ENCODE measurements at regions of chr2 and their contacts with region 1.

Region 1: GRCh38 chr2:110677530-110678456 is at the start of gene BUB1:
- DNase-seq: peak; percentile 83
- ATAC-seq: peak; percentile 88
- H3K4me3 ChIP-seq: peak within 1 kb of the TSS; percentile 87
- H3K27ac ChIP-seq: peak within 1 kb of the TSS; percentile 98
- H3K4me1 ChIP-seq: peaks cover 9% of the 10 kb centered on the region
- H3K27me3 ChIP-seq: no peaks in the 10 kb centered on the region
- CTCF ChIP-seq: no peak
- EP300 ChIP-seq: peak in 1 of 2 experiments; percentile 52; a peak in 2 of 4 replicates
- POLR2A ChIP-seq: peak; percentile 87
- RAD21 ChIP-seq: no peak
- polyA plus RNA-seq, gene BUB1: 52.4 to 57.0 TPM

Region 2: DNA sequence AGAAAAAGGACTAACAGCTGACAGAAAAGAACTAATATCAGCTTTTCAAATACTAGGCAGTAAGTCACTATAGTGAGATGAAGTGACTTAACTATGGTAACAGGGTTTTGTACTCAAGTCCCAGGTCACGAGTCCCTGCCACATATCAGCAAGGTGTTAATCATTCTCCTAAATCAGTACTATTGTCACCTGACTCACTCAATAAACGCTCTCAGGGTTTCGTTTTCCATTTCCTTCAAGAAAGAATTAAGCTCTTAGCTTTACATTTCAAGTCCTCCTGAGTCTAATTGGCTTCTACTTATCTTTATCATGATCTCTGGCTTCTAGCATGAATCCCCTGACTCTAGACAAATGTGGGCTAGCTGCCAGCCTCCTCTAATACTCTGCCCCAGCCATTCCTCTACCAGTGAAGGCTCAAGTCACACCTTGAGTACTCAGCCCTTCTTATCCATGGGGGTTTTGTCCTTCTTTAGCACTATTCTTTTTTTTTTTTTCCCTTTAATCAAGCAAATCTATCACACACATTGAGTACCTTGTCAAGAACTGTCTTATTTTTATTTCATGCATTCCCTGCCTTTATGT is 20.0 kb before region 1 on chr2:
- CTCF ChIA-PET with region 1: interaction called, 5 read pairs
- POLR2A ChIA-PET with region 1: interaction called, 15 read pairs
- RAD21 ChIA-PET with region 1: interaction called, 23 read pairs
- SMC1A ChIA-PET with region 1: interaction called, 26 read pairs
- in situ Hi-C with region 1: no loop called
- intact Hi-C with region 1: no loop called
- DNase-seq: no peak
- ATAC-seq: peak; percentile 71
- H3K4me3 ChIP-seq: no peak overlapping the region
- H3K27ac ChIP-seq: no peak overlapping the region
- H3K4me1 ChIP-seq: no peaks in the 10 kb centered on the region
- H3K27me3 ChIP-seq: no peaks in the 10 kb centered on the region
- CTCF ChIP-seq: no peak
- EP300 ChIP-seq: no peak
- POLR2A ChIP-seq: no peak
- RAD21 ChIP-seq: no peak

Region 3: GRCh38 chr2:110688594-110689091 is 10.8 kb after region 1 on chr2:
- CTCF ChIA-PET with region 1: interaction called, 8 read pairs
- POLR2A ChIA-PET with region 1: interaction called, 13 read pairs
- RAD21 ChIA-PET with region 1: interaction called, 3 read pairs
- SMC1A ChIA-PET with region 1: interaction called, 4 read pairs
- in situ Hi-C with region 1: no loop called
- intact Hi-C with region 1: no loop called
- DNase-seq: no peak
- ATAC-seq: no peak
- H3K4me3 ChIP-seq: no peak overlapping the region
- H3K27ac ChIP-seq: no peak overlapping the region
- H3K4me1 ChIP-seq: no peaks in the 10 kb centered on the region
- H3K27me3 ChIP-seq: no peaks in the 10 kb centered on the region
- CTCF ChIP-seq: no peak
- EP300 ChIP-seq: no peak
- POLR2A ChIP-seq: no peak
- RAD21 ChIP-seq: no peak

Region 4: DNA sequence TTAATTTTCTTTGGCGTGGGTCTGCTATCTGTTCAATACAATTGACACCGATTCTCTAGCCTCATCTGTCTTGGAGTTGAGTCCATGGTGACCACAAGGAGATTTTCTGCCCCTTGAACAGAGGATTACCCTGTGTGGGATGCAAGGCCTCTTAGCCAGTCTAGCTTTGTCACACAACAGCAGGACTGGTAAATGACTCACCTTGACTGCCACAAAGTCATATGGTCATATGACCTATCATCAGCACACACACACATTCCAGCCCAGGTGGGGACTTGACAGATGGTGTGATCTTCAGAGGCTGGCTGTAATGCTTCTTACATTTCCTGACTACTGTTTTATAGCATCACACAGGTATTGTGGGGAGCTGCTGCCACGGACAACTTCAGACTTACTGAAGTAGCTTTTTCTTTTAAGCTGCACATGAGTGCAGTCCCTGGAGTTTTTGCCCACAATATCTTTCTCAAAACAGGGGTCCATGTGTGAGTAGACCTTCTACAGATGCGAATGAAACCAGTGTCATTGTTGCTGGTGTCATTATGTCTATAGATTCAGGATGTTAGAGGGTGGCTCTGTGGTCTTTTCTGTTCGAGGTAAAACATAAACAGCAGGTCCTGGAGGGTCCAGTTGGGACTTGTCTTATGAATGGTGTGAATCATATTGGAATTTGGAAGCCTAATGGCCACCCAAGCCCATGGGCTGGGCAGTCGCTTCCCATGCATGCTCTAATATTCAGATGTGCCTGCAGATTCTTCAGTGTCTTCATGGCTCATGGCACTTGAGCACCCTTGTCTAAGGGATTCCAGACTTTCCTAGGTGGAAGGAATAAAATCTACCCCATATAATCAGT is 35.9 kb after region 1 on chr2:
- CTCF ChIA-PET with region 1: interaction called, 3 read pairs
- POLR2A ChIA-PET with region 1: interaction called, 3 read pairs
- RAD21 ChIA-PET with region 1: interaction called, 8 read pairs
- SMC1A ChIA-PET with region 1: interaction called, 43 read pairs
- in situ Hi-C with region 1: no loop called
- intact Hi-C with region 1: no loop called
- DNase-seq: no peak
- ATAC-seq: peak; percentile 55
- H3K4me3 ChIP-seq: no peak overlapping the region
- H3K27ac ChIP-seq: no peak overlapping the region
- H3K4me1 ChIP-seq: no peaks in the 10 kb centered on the region
- H3K27me3 ChIP-seq: peaks cover 0 to 3% of the 10 kb centered on the region in 2 experiments; a peak in 1 of 4 replicates
- CTCF ChIP-seq: no peak
- EP300 ChIP-seq: no peak
- POLR2A ChIP-seq: no peak
- RAD21 ChIP-seq: no peak

Region 5: DNA sequence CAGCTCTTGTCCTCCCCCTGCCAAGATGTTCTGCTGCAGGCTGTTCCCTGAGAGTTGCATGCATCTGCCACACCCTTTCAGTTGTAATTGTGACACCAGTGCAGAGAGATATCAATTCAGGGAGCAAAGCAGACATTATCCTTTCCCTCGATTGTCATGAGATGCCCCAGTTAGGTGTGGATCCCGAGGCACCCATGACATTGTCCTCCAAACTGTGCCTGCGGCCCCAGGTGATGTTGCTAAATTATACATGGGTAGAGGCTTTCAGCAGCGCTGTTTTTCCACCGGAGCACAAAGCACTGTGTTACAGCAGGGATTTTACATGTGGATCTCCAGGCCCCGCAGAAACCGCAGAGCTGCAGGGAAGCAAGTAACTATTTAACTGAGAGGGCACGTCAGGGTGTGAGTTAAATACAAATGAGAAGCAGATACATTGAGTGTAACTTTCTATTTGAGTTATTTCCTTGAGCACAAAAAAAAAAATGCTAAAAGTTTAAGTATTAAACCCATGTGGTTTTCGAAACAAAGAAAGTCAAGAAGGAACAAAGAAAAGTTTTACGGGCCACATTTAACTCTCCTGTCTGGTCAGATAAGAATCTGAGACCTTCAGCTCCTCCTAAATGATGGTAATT is 352.6 kb after region 1 on chr2:
- CTCF ChIA-PET with region 1: no interaction called
- POLR2A ChIA-PET with region 1: no interaction called
- RAD21 ChIA-PET with region 1: no interaction called
- SMC1A ChIA-PET with region 1: no interaction called
- in situ Hi-C with region 1: no loop called
- intact Hi-C with region 1: no loop called
- DNase-seq: no peak
- ATAC-seq: peak; percentile 81
- H3K4me3 ChIP-seq: no peak overlapping the region
- H3K27ac ChIP-seq: no peak overlapping the region
- H3K4me1 ChIP-seq: peaks cover 11% of the 10 kb centered on the region
- H3K27me3 ChIP-seq: peaks cover 0 to 11% of the 10 kb centered on the region in 2 experiments; a peak in 3 of 4 replicates
- CTCF ChIP-seq: no peak
- EP300 ChIP-seq: peak in 1 of 2 experiments; percentile 43; a peak in 2 of 4 replicates
- POLR2A ChIP-seq: no peak
- RAD21 ChIP-seq: no peak

Measured in GM12878 (cell line).